ENCODE measurements at regions of chr17 and their contacts with region 1.

Region 1: DNA sequence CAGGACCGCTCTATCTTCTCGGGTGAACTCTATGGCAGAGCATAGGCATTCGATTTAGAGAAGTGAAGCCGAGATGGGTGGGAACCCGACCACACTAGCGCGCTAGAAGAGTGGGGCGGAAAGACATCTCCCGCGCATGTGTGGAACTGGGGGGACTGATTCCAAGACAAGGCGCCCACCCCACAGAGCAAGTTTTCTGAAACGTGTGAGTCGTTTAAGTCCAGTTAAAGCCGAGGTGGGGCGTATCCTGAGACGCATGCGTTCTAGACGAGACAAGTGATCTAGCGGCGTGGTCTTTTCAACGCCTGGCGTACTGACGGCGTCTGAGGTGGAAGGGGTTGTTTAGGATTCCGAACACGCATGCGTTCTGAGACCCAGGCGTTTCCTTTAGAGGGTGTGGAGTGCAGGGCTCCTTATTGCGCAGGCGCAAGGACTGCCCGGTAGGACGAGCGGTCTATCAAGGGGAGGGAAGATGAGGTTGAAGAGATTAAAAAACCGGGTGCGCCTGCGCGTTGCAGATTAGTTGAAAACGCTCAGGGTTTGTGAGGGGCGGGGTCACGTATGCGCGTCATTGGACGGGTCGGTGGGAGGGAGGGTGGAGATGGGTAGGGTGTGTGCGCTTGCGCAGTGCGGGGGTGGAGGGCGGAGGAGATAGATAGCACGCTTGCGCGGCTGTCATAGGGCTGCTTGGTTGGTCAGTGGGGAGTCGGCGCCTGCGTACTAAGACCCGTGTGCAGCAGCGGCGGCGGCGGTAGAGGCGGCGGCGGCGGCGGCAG is at the start of gene EIF5A:
- DNase-seq: peak; percentile 100
- H3K4me3 ChIP-seq: peak within 1 kb of the TSS; percentile 94
- H3K27ac ChIP-seq: peak within 1 kb of the TSS; percentile 99
- H3K4me1 ChIP-seq: peaks cover 19% of the 10 kb centered on the region
- H3K27me3 ChIP-seq: no peaks in the 10 kb centered on the region
- CTCF ChIP-seq: no peak
- total RNA-seq, gene EIF5A: 1,112 and 1,128 TPM in 2 replicates

Region 2: DNA sequence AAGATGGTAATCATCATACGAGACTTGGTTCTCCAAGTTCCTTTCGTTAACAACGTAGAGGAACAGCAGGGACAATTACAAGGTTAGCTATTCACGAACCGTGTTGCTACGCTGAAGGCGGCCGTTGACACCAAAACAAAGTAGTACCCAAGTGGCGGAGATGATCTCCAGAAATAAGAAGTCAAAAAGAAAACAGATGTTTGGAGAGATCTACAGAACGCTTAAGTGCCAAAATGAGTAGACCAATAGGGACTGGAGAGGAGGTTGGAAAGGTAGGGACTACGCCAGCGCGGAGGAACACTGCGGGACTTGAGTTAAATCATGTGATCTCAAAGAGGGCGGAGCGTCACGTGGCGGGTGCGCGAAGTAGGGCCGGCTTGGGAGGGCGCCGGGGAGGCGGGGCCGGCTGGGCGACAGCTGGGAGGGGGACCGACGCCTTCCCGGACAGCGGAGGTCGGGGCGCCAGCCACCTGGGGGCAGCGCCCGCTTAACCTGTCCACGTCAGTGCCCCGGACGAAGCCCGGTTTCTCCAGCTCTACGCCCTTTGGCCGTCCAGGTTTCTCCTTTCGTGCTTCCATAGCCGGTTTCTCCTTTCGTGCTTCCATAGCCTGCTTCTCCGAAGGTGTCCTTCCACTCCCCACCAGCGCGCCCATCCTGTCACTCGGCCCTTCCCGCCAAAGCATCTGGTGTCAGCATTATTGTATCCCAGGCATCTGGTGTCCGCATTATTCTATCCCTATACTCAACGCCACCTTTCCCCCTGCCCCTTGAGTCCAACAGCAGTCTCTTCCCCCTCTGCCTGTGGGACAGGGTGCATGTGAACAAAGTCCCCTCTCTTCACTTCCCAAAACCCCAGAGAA is 64.2 kb before region 1 on chr17:
- CTCF ChIA-PET with region 1: interaction called, 5 read pairs
- POLR2A ChIA-PET with region 1: interaction called, 10 read pairs
- intact Hi-C with region 1: no loop called
- DNase-seq: peak; percentile 97
- H3K4me3 ChIP-seq: peak overlapping the region; percentile 72
- H3K27ac ChIP-seq: peak overlapping the region; percentile 84
- H3K4me1 ChIP-seq: peaks cover 23% of the 10 kb centered on the region
- H3K27me3 ChIP-seq: no peaks in the 10 kb centered on the region
- CTCF ChIP-seq: no peak

Region 3: DNA sequence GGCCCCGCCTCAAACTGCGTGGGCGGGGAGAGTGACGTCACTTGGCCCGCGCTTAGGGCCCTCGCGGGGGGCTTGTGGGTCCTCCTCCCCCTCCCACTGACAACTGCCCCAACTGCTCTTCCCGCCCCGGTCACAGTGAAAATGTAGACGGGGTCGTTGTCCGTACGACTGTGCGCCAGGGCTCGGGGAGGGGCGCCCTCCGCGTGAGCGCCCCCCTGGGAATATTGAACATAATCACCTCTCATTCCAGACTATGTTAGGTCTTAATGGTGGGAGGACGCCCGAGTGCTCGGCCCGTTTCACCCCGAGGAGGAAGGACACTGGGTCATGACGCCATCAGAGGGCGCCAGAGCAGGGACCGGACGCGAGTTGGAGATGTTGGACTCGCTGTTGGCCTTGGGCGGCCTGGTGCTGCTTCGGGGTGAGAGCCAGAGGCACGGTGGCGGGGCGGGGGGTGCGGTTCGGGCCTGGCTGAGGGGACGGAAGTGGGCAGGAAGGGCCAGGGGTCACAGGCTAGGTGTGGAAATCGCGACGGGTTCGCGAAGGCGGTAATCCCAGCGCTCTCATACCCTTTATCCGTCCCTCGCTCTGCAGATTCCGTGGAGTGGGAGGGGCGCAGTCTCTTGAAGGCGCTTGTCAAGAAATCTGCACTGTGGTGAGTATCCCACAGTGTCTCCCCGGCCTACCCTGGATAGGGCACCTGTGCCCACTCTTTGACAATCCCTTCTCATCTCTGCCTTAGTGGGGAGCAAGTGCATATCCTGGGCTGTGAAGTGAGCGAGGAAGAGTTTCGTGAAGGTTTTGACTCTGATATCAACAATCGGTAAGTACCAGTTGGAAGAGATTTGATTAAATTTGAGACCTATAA is 54.7 kb before region 1 on chr17 and contains the start of gene ELP5:
- CTCF ChIA-PET with region 1: no interaction called
- POLR2A ChIA-PET with region 1: no interaction called
- intact Hi-C with region 1: loop called (anchors 5 kb)
- DNase-seq: peak; percentile 94
- H3K4me3 ChIP-seq: peak within 1 kb of the TSS; percentile 74
- H3K27ac ChIP-seq: peak within 1 kb of the TSS; percentile 98
- H3K4me1 ChIP-seq: peaks cover 17% of the 10 kb centered on the region
- H3K27me3 ChIP-seq: no peaks in the 10 kb centered on the region
- CTCF ChIP-seq: peak; percentile 46
- total RNA-seq, gene ELP5: 123 and 128 TPM in 2 replicates

Measured in A673 (cell line).